Naive thymus-derived CD4-positive, alpha-beta T cell (primary cell): ENCODE measurements at regions of chr12 and their contacts with region 1.

Region 1: DNA sequence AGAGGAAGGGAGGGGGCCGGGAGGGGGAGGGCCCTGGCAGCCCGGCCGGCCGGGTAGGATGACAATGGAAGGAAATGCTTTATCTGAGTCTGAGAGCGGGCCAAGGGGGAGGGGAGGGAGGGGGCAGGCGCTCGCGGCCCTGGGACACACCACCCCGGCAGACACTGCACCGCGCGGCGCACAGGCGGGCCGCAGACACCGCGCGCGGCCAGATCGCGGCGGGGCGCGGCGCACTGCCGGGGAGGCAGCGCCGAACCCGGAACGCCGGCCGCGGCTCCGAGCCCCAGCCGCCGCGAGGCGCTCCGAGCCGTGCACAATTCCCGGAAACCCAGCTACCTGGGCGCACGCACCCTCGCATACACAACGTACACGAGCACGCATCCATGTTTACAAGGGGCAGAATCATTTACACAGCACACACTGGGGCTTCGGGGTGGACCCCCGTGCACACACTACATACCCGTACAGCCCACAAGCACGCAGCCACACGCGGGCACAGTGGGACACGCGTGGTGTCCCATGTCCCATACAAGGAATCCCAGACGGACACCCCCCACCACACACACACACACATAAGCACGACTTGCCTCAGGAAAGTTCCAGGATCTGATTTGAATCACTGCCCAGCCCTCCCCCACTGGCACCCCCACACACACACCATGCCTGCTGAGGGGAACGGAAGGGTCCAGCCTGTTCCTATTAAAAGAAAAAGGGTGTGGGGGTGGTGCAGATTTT is at the start of gene HDAC7:
- DNase-seq: peak; percentile 54 to 79 (median 69)
- ATAC-seq: peak; percentile 76
- H3K4me3 ChIP-seq: peak within 1 kb of the TSS; percentile 82
- H3K4me3 Mint-ChIP-seq: peak within 1 kb of the TSS; percentile 86 to 99 (median 96)
- H3K27ac ChIP-seq: peak within 1 kb of the TSS; percentile 88
- H3K27ac Mint-ChIP-seq: peak within 1 kb of the TSS; percentile 96 to 99 (median 97)
- H3K4me1 ChIP-seq: peaks cover 55 to 73% of the 10 kb centered on the region in 2 donors
- H3K4me1 Mint-ChIP-seq: peaks cover 75 to 87% (median 82%) of the 10 kb centered on the region in 7 donors
- H3K27me3 ChIP-seq: no peaks in the 10 kb centered on the region
- H3K27me3 Mint-ChIP-seq: no peaks in the 10 kb centered on the region
- total RNA-seq, gene HDAC7: 150 to 194 (median 188) TPM

Region 2: GRCh38 chr12:47102845-47103651 is 717.0 kb before region 1 on chr12:
- CTCF ChIA-PET with region 1: no interaction called
- POLR2A ChIA-PET with region 1: no interaction called
- intact Hi-C with region 1: no loop called
- DNase-seq: no peak
- ATAC-seq: no peak
- H3K4me3 ChIP-seq: no peak overlapping the region
- H3K4me3 Mint-ChIP-seq: no peak overlapping the region
- H3K27ac ChIP-seq: no peak overlapping the region
- H3K27ac Mint-ChIP-seq: peak overlapping the region in 1 of 9 donors; percentile 11
- H3K4me1 ChIP-seq: no peaks in the 10 kb centered on the region
- H3K4me1 Mint-ChIP-seq: peaks cover 0 to 9% (median 0%) of the 10 kb centered on the region in 7 donors
- H3K27me3 ChIP-seq: no peaks in the 10 kb centered on the region
- H3K27me3 Mint-ChIP-seq: no peaks in the 10 kb centered on the region

Region 3: GRCh38 chr12:47797441-47797840 is 22.6 kb before region 1 on chr12:
- CTCF ChIA-PET with region 1: interaction called, 539 read pairs
- POLR2A ChIA-PET with region 1: interaction called, 364 read pairs
- intact Hi-C with region 1: loop called (anchors 2 kb)
- DNase-seq: peak in 6 of 9 donors; percentile 36 to 54 (median 46)
- ATAC-seq: peak; percentile 74
- H3K4me3 ChIP-seq: no peak overlapping the region
- H3K4me3 Mint-ChIP-seq: peak overlapping the region in 3 of 10 donors; percentile 53 to 64 (median 61)
- H3K27ac ChIP-seq: peak overlapping the region; percentile 51
- H3K27ac Mint-ChIP-seq: peak overlapping the region; percentile 57 to 93 (median 87)
- H3K4me1 ChIP-seq: peaks cover 6 to 35% of the 10 kb centered on the region in 2 donors
- H3K4me1 Mint-ChIP-seq: peaks cover 20 to 47% (median 42%) of the 10 kb centered on the region in 7 donors
- H3K27me3 ChIP-seq: no peaks in the 10 kb centered on the region
- H3K27me3 Mint-ChIP-seq: no peaks in the 10 kb centered on the region